Ovary (tissue), 10 donors: ENCODE measurements at regions of chr2 and their contacts with region 1.

Region 1: DNA sequence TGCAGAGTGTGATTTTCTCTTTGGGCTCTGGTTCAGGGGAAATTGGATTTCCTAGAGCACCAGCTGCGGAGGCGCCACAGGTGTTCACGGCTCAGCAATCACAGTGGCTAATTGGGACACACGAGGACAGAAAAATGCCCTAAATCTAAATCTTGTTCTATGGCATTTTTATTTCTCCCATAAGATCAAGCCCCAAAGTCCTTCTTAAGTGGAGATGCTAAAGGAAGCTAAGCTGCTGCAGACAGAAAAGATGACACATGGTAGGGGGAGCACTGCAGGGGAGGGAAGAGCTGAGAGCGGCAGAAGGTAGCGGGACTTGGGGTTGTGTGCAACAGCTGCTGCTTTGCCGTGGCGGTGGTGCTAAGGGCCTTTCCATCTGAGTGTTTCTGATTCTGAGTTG is 280.6 kb downstream of the MYT1L start:
- DNase-seq: no peak
- H3K4me3 ChIP-seq: no peak overlapping the region
- H3K27ac ChIP-seq: no peak overlapping the region
- H3K4me1 ChIP-seq: no peaks in the 10 kb centered on the region
- H3K27me3 ChIP-seq: no peaks in the 10 kb centered on the region
- CTCF ChIP-seq: no peak
- EP300 ChIP-seq: no peak
- POLR2A ChIP-seq: no peak

Region 2: DNA sequence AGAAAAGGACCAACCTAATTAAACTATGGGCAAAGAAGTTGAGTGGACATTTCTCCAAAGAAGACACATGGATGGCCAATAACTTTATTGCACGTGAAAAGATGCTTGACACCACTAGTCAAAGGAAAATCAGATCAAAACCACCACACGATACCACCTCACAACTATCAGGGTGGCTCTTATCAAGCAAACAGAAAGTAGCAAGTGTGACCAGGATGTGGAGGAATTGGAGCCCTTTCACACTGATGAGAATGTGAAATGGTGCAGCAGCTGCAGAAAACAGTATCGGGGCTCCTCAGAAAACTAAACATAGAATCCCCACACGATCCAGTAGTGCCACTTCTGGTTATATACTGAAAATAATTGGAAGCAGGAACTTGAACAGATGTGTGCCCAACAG is 1690.3 kb before region 1 on chr2:
- intact Hi-C with region 1: loop called in 1 of 4 experiments (anchors 5 kb)
- DNase-seq: no peak
- H3K4me3 ChIP-seq: no peak overlapping the region
- H3K27ac ChIP-seq: no peak overlapping the region
- H3K4me1 ChIP-seq: no peaks in the 10 kb centered on the region
- H3K27me3 ChIP-seq: no peaks in the 10 kb centered on the region
- CTCF ChIP-seq: no peak
- EP300 ChIP-seq: no peak
- POLR2A ChIP-seq: no peak

Region 3: GRCh38 chr2:3500326-3500899 is 1450.0 kb after region 1 on chr2:
- intact Hi-C with region 1: no loop called
- DNase-seq: no peak
- H3K4me3 ChIP-seq: no peak overlapping the region
- H3K27ac ChIP-seq: no peak overlapping the region
- H3K4me1 ChIP-seq: peaks cover 1% of the 10 kb centered on the region
- H3K27me3 ChIP-seq: no peaks in the 10 kb centered on the region
- CTCF ChIP-seq: no peak
- EP300 ChIP-seq: no peak
- POLR2A ChIP-seq: no peak